Astrocyte of the cerebellum (primary cell): ENCODE measurements at regions of chr13 and their contacts with region 1.

Region 1: DNA sequence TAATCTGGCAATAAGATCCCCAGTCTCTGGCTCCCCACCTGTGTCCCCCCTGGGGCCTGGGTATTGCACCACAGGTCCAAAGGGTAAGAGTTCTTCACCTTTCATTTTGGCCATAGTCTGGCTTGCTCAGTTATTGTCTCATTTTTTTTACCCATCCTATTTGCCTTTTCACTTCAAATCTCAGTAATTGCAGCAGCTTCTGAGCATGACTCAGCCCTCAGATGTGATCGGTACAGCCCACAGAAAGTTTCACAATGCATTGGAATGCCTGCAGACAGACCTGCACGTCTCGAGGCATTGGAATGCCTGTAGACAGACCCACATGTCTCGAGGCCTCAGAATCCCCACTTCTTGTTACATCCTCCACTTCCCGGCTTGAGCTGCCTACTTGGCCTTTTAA is 173.6 kb downstream of the NUFIP1 start:
- DNase-seq: peak; percentile 94
- H3K4me3 ChIP-seq: no peak overlapping the region
- CTCF ChIP-seq: no peak

Region 2: DNA sequence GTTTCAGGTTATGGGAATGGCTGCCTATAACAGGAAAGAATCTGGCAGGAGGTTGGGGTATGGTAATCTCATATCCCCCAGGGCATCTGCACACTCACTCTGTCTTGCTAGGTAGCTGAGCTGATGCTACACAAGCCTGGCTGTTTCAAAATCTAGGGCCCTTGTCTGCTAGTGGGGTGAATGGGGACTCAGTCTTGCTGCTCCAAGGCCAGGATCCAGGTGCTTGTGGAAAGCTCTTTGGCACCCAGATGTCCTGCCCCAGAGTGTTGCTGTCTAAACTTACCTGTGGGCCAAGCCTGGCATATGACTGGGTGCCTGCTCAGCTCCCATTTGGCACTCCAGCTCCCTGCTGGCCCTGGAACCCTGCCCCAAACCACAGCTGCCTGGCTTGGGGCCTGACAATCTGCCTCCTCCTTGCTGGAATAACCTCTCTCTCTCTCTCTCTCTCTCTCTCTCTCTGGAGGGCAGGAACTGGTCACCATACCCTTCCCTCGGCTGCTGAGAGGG is 81.4 kb before region 1 on chr13:
- in situ Hi-C with region 1: loop called (anchors 10 kb)
- DNase-seq: no peak
- H3K4me3 ChIP-seq: no peak overlapping the region
- CTCF ChIP-seq: no peak